ENCODE measurements at regions of chr6 and their contacts with region 1.

Region 1: GRCh38 chr6:167962711-167963110 is 34.8 kb upstream of the KIF25 start:
- DNase-seq: no peak
- ATAC-seq: no peak
- H3K4me3 ChIP-seq: no peak overlapping the region
- H3K27ac ChIP-seq: peak overlapping the region; percentile 78
- H3K4me1 ChIP-seq: peaks cover 77% of the 10 kb centered on the region
- H3K27me3 ChIP-seq: no peaks in the 10 kb centered on the region
- CTCF ChIP-seq: no peak
- EP300 ChIP-seq: no peak
- POLR2A ChIP-seq: no peak
- RAD21 ChIP-seq: no peak

Region 2: GRCh38 chr6:167932468-167933276 is 30.0 kb before region 1 on chr6:
- CTCF ChIA-PET with region 1: no interaction called
- POLR2A ChIA-PET with region 1: interaction called, 22 read pairs
- in situ Hi-C with region 1: no loop called
- intact Hi-C with region 1: loop called (anchors 2 kb)
- DNase-seq: peak; percentile 88
- ATAC-seq: peak; percentile 82
- H3K4me3 ChIP-seq: peak overlapping the region; percentile 26 to 50 (median 48); a peak in 4 of 6 replicates
- H3K27ac ChIP-seq: peak overlapping the region; percentile 77
- H3K4me1 ChIP-seq: peaks cover 61% of the 10 kb centered on the region
- H3K27me3 ChIP-seq: no peaks in the 10 kb centered on the region
- CTCF ChIP-seq: no peak
- EP300 ChIP-seq: peak in 1 of 2 experiments; percentile 31; a peak in 2 of 4 replicates
- POLR2A ChIP-seq: peak; percentile 39 to 55; a peak in 2 of 4 replicates
- RAD21 ChIP-seq: no peak

Region 3: DNA sequence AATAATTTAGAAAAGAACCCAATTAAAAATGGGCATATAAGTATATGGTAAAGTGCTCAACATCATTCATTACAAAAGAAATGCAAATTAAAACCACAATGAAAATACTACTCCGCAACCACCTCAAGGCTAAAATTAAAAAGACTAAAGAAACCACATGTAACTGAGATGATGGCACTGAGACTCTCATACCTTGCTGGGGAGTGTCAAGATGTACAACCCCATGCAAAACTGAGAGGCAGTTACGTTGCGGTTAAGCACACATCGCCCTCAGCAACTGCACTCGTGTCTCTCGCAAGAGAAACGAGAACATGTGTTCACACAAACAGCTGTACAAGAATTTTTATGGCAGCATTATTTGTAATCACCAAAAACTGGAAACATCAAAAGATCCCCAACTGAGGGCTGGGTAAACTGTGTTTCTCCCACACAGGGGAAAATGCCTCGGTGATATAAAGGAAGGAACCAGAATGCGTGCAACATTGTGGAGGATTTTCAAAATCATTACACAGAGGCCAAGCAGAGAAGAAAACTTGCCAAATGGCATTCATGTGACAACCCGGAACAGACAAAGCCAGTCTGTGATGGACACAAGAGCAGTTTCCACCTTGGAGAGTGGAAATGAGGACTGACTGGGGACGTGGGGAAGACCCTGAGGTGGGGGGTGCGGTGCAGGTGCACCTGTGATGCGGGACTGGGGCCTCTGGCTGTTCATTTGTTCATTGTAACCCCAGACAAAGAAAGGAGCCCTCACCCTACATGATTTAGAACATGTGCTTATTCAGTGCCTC is 1594.2 kb after region 1 on chr6:
- CTCF ChIA-PET with region 1: no interaction called
- POLR2A ChIA-PET with region 1: no interaction called
- in situ Hi-C with region 1: no loop called
- intact Hi-C with region 1: no loop called
- DNase-seq: no peak
- ATAC-seq: no peak
- H3K4me3 ChIP-seq: no peak overlapping the region
- H3K27ac ChIP-seq: no peak overlapping the region
- H3K4me1 ChIP-seq: no peaks in the 10 kb centered on the region
- H3K27me3 ChIP-seq: no peaks in the 10 kb centered on the region
- CTCF ChIP-seq: no peak
- EP300 ChIP-seq: no peak
- POLR2A ChIP-seq: no peak
- RAD21 ChIP-seq: no peak

Measured in HepG2 (cell line).